ENCODE measurements at regions of chr2 and their contacts with region 1.

Region 1: GRCh38 chr2:149666809-149667320 is 79.3 kb upstream of the MMADHC start:
- DNase-seq: no peak
- ATAC-seq: no peak
- H3K4me3 ChIP-seq: no peak overlapping the region
- H3K27ac ChIP-seq: no peak overlapping the region
- H3K4me1 ChIP-seq: peaks cover 10% of the 10 kb centered on the region
- H3K27me3 ChIP-seq: no peaks in the 10 kb centered on the region
- CTCF ChIP-seq: no peak

Region 2: GRCh38 chr2:149703281-149703680 is 36.4 kb after region 1 on chr2:
- CTCF ChIA-PET with region 1: no interaction called
- POLR2A ChIA-PET with region 1: no interaction called
- intact Hi-C with region 1: loop called (anchors 1 kb)
- DNase-seq: no peak
- ATAC-seq: no peak
- H3K4me3 ChIP-seq: no peak overlapping the region
- H3K27ac ChIP-seq: no peak overlapping the region
- H3K4me1 ChIP-seq: no peaks in the 10 kb centered on the region
- H3K27me3 ChIP-seq: no peaks in the 10 kb centered on the region
- CTCF ChIP-seq: no peak